H1 (cell line): ENCODE measurements at regions of chr5 and their contacts with region 1.

Region 1: DNA sequence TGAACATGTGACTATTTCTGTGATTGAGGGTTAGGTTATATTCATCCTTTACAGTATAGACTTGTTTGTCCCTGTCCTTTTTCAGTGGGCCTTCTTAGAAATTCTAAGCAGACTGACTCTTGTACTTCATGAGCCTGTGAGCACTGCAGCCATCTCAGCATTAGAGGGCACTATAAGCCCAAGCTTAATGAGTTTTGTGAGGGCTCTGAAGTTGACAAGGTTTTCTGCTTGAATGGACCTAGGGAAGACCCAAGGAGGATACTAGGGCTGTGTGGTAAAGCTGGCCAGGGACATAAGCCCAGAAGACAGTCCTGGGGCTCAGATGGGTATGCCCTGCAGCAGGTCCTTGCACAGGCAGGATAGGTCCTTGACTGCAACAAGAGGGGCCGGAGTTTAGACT is 126.5 kb downstream of the MRPS30 start:
- DNase-seq: peak in 1 of 2 experiments; percentile 54
- H3K4me3 ChIP-seq: no peak overlapping the region
- H3K27ac ChIP-seq: no peak overlapping the region
- H3K4me1 ChIP-seq: no peaks in the 10 kb centered on the region
- H3K27me3 ChIP-seq: no peaks in the 10 kb centered on the region
- CTCF ChIP-seq: peak in 2 of 3 experiments; percentile 81 to 91; a peak in 3 of 4 replicates
- EP300 ChIP-seq: no peak
- POLR2A ChIP-seq: no peak
- RAD21 ChIP-seq: peak; percentile 98 to 99

Region 2: GRCh38 chr5:44919560-44919959 is 15.7 kb before region 1 on chr5:
- CTCF ChIA-PET with region 1: interaction called, 10 read pairs
- POLR2A ChIA-PET with region 1: no interaction called
- DNase-seq: no peak
- H3K4me3 ChIP-seq: no peak overlapping the region
- H3K27ac ChIP-seq: no peak overlapping the region
- H3K4me1 ChIP-seq: no peaks in the 10 kb centered on the region
- H3K27me3 ChIP-seq: no peaks in the 10 kb centered on the region
- CTCF ChIP-seq: no peak
- EP300 ChIP-seq: no peak
- POLR2A ChIP-seq: no peak
- RAD21 ChIP-seq: no peak

Region 3: DNA sequence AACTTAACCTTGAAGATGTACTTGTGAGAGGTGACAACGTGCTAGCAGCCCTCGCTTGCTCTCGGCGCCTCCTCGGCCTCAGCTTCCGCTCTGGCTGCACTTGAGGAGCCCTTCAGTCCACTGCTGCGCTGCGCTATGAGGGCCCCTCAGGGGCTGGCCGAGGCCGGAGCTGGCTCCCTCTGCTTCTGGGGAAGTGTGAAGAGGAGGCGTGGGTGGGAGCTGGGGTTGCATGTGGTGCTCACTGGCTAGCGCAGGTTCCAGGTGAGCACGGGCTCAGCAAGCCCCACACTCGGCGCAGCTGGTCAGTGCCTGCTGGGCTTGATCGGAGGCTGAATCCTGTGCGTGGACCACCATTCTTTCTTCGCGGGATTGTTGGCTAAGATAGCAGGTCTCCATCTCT is 39.6 kb after region 1 on chr5:
- CTCF ChIA-PET with region 1: no interaction called
- POLR2A ChIA-PET with region 1: no interaction called
- DNase-seq: no peak
- H3K4me3 ChIP-seq: no peak overlapping the region
- H3K27ac ChIP-seq: no peak overlapping the region
- H3K4me1 ChIP-seq: no peaks in the 10 kb centered on the region
- H3K27me3 ChIP-seq: no peaks in the 10 kb centered on the region
- CTCF ChIP-seq: no peak
- EP300 ChIP-seq: no peak
- POLR2A ChIP-seq: no peak
- RAD21 ChIP-seq: no peak